ENCODE measurements at regions of chrX and their contacts with region 1.

Region 1: GRCh38 chrX:110146521-110146920 is 143.6 kb downstream of the TMEM164 start:
- DNase-seq: peak; percentile 52 to 55
- ATAC-seq: peak; percentile 85 to 90
- H3K4me3 ChIP-seq: no peak overlapping the region
- H3K27ac ChIP-seq: peak overlapping the region; percentile 55 to 60; a peak in 5 of 6 replicates
- H3K4me1 ChIP-seq: peaks cover 21% of the 10 kb centered on the region
- CTCF ChIP-seq: peak; percentile 67
- EP300 ChIP-seq: no peak
- POLR2A ChIP-seq: no peak
- RAD21 ChIP-seq: peak; percentile 74 to 82

Region 2: GRCh38 chrX:109911046-109911445 is 235.5 kb before region 1 on chrX:
- CTCF ChIA-PET with region 1: interaction called, 45 read pairs
- POLR2A ChIA-PET with region 1: no interaction called
- DNase-seq: peak in 1 of 2 experiments; percentile 7
- ATAC-seq: no peak; a peak in 1 of 6 replicates
- H3K4me3 ChIP-seq: no peak overlapping the region
- H3K27ac ChIP-seq: peak overlapping the region in 1 of 2 experiments; percentile 44; a peak in 1 of 6 replicates
- H3K4me1 ChIP-seq: no peaks in the 10 kb centered on the region
- CTCF ChIP-seq: peak; percentile 68
- EP300 ChIP-seq: no peak
- POLR2A ChIP-seq: no peak
- RAD21 ChIP-seq: peak; percentile 62 to 71

Region 3: GRCh38 chrX:110026099-110026844 is 120.2 kb before region 1 on chrX:
- CTCF ChIA-PET with region 1: interaction called, 11 read pairs
- POLR2A ChIA-PET with region 1: no interaction called
- DNase-seq: peak in 1 of 2 experiments; percentile 59
- ATAC-seq: peak; percentile 69 to 78
- H3K4me3 ChIP-seq: no peak overlapping the region
- H3K27ac ChIP-seq: peak overlapping the region; percentile 72 to 79
- H3K4me1 ChIP-seq: peaks cover 69% of the 10 kb centered on the region
- CTCF ChIP-seq: no peak
- EP300 ChIP-seq: no peak
- POLR2A ChIP-seq: no peak
- RAD21 ChIP-seq: no peak

Region 4: DNA sequence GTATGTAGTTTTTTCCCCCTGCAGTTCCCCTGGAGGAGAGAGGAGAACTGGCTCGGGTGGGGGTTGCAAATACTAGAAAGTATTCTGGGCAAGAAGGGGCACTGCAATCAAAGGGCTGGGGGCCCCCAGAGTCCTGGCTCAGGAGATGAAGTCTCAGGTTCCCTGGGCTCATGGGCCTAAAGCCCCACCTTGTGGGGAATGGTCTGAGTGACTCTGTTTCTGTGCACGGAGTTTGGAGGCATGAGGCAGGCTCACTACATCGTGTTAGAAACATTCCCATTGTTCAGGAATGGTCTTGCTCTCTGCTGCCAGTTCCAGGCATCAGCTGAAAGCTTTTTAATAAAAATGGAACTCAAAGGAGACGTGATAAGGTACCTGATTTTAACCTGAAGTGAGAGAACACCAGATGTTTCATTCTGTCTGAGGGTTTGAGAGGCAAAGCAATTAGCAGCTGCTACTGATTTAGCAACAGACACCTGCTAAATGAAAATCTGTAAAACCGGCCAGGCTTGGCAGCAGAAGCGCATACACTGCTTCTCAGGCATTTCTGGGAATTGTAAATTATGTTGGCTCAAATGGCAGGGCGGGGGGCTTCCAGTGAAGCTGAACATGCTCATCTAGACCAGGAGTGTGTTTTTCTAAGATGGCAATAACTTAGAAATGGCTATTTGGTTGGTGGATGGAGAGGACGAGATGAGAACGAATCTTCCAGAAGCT is 20.9 kb before region 1 on chrX:
- CTCF ChIA-PET with region 1: interaction called, 24 read pairs
- POLR2A ChIA-PET with region 1: no interaction called
- DNase-seq: peak in 1 of 2 experiments; percentile 20
- ATAC-seq: peak; percentile 56 to 89
- H3K4me3 ChIP-seq: no peak overlapping the region
- H3K27ac ChIP-seq: peak overlapping the region; percentile 48 to 70; a peak in 4 of 6 replicates
- H3K4me1 ChIP-seq: peaks cover 23% of the 10 kb centered on the region; the same call in 2 of the 3 replicates
- CTCF ChIP-seq: peak; percentile 44
- EP300 ChIP-seq: no peak
- POLR2A ChIP-seq: no peak
- RAD21 ChIP-seq: peak; percentile 64 to 69

Region 5: DNA sequence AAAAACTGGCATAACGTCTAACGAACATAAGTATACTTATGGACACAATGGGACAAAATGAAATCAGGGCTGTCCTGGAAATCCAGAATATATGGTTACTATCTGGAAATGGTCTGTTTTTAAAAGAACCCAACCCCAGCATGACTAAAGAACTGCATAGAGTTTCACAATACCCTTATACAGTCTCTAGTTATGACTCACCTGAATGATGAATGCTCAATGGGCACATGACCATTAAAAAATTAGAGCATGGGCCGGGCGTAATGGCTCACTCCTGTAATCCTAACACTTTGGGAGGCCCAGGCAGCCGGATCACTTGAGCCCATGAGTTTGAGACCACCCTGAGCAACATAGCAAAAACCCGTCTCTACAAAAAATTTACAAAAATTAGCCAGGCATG is 139.6 kb after region 1 on chrX:
- CTCF ChIA-PET with region 1: no interaction called
- POLR2A ChIA-PET with region 1: no interaction called
- DNase-seq: peak; percentile 39 to 58
- ATAC-seq: peak; percentile 81 to 92
- H3K4me3 ChIP-seq: no peak overlapping the region
- H3K27ac ChIP-seq: peak overlapping the region; percentile 72 to 86
- H3K4me1 ChIP-seq: peaks cover 58% of the 10 kb centered on the region
- CTCF ChIP-seq: no peak
- EP300 ChIP-seq: peak in 1 of 2 experiments; percentile 31; a peak in 2 of 5 replicates
- POLR2A ChIP-seq: no peak
- RAD21 ChIP-seq: no peak

Region 6: DNA sequence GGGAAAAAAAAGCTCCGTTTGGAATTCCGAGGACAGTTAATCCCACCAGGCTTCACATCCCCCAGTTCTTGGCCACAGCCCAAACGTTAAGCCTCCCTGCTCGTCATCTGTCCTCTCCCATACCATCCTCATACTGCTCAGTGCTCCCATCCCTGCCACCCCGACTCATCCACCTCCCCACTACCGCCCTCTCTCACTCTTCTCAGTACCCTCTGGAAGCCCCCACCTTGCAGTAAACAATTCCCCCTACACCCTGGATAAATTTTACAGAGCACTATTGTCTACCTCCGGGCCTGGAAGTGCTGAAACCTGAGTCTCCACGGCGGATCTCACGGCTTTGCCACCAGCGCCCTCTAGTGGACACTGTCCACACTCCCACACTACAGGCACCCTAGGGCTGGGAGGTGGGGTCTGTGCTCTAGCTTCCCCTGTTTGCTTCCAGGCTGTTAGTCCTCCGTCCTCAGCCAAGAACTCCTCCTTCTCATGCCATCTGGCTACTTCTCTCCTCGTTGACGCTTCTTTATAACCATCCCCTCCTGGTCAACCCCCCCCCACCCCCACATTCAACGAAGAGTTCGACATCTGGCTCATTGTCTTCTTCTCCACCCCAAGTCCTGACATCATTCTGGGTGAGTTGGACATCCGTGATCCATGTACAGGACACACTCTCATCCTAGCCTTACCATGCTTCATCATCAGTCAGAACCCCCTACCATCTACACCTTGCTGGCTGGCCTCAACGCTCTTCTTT is 266.6 kb after region 1 on chrX:
- CTCF ChIA-PET with region 1: interaction called, 848 read pairs
- POLR2A ChIA-PET with region 1: no interaction called
- DNase-seq: peak; percentile 66 to 76
- ATAC-seq: peak; percentile 96 to 97
- H3K4me3 ChIP-seq: no peak overlapping the region
- H3K27ac ChIP-seq: peak overlapping the region; percentile 28 to 69; a peak in 3 of 6 replicates
- H3K4me1 ChIP-seq: peaks cover 22% of the 10 kb centered on the region
- CTCF ChIP-seq: peak; percentile 77
- EP300 ChIP-seq: no peak
- POLR2A ChIP-seq: no peak
- RAD21 ChIP-seq: peak; percentile 77 to 86

Measured in A549 (cell line).